ENCODE measurements at regions of chr9 and their contacts with region 1.

Region 1: DNA sequence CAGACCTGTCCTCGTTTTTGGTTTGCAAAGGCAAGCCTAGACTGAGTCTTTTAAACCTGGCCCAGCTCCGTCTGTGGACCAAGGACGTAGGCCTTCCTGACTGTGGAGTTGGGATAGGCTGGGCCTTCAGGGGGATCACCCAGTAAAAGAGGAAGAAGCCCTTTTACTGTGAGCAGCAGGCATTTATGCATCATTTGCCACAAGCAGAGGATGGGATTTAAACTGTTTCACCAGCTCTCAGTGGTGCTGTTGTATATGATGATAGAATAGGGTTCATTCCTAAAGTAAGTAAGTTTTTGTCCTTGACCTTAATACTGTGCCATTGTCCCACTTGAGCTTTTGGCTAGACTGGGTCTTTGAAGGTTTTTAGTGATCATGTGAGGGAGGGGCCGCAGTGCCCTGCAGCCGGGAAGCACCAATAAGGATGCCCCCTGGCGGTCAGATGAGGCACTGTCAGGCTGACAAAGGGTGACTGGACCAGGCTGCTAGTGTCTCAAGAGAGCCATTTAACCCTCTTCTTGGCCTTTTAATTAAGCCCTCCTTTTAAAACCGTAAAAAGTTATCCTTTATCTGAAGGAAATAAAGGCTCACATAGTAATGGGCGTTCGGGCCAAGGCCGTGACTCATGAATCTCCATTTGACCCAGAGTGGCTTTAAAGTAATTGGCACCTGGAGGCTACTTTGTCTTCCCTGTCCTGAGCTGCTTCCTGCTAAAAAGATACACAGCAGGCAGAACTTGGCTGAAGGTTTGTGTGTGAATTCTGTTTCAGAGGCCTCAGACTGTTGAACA is 74.0 kb downstream of the UBAP1 start:
- DNase-seq: no peak
- ATAC-seq: peak; percentile 30

Region 2: DNA sequence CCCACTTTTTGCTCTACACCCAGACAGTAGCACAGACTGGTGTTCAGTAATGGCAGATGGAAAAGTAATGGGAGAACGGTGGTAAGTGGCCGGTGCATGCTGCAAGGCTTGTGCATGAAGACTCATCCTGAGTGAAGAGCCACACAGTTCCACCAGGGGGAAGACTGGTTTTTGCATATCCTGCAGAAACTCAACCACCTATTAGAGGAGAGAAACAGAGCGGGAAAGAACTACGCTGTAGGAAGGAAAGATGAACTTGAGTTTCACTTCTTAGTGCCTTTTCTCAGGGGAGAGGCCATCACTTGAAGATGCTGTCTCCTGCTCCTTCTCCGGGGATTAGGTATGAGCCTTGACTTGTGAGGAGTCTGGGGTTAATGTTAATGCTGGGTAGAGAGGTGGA is 467.0 kb before region 1 on chr9:
- intact Hi-C with region 1: loop called (anchors 10 kb)
- DNase-seq: no peak
- ATAC-seq: no peak

Region 3: DNA sequence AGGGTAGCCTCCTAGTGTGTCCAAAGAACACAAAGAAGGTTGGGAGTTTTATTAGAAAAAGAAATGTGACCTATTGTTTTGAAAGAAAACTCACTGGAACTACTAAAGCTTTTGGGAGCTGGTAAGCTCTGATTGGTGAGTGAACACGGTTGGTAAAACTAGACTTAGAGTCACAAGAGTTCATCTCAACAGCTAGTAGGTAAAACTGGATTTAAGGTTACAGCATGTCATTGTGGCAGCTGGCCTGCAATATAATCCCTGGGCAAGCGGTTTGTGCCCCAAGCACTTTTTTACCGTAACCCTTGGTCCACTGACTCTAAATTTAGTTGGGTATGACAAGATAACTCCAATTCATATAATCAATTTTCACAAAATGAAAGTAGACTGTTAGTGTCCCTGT is 251.6 kb before region 1 on chr9:
- intact Hi-C with region 1: loop called (anchors 10 kb)
- DNase-seq: no peak
- ATAC-seq: no peak

Region 4: GRCh38 chr9:34072868-34073590 is 179.8 kb before region 1 on chr9:
- intact Hi-C with region 1: loop called (anchors 10 kb)
- DNase-seq: no peak
- ATAC-seq: peak; percentile 58

Region 5: DNA sequence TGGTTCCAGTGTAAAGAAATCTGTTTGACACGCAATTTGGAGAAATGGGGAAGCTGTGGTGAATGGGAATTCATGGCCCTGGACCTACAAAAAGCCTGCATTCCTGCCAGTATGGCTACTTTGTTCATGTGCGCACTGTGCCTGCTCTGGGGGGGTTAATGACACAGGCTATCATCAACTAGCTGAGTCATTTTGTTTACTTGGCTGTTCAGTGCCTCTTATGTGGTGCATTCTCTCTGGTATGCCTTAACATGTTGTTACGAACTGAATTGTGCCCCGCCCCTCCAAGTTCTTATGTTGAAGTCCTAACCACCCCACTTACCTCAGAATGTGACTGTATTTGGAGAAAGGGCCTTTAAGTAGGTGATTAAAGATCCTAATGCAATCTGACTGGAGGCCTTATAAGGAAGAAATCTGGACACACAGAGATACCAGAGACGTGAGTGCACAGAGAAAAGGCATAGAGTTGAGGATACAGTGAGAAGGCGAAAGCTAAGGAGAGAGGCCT is 94.4 kb before region 1 on chr9:
- intact Hi-C with region 1: no loop called
- DNase-seq: no peak
- ATAC-seq: no peak

Region 6: GRCh38 chr9:34178520-34179212 is 74.2 kb before region 1 on chr9 and contains the start of gene UBAP1:
- intact Hi-C with region 1: loop called (anchors 5 kb)
- DNase-seq: peak; percentile 98
- ATAC-seq: peak; percentile 99
- total RNA-seq, gene UBAP1: 48.9 TPM

Region 7: DNA sequence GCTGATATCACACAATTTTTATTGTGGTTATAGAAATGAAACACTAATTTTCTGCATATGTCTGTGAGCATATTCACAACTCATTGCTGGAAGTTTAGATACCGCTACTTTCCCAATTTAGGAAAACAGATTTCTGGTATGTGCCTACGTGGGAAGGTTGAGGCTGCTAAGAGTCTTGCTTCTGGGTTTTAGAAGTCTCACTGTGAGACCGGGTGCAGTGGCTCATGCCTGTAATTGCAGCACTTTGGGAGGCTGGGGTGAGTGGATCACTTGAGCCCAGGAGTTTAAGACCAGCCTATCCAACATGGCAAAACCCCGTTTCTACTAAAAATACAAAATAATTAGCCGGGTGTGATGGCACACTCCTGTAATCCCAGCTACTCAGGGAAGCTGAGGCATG is 34.4 kb before region 1 on chr9:
- intact Hi-C with region 1: no loop called
- DNase-seq: no peak
- ATAC-seq: no peak

Region 8: DNA sequence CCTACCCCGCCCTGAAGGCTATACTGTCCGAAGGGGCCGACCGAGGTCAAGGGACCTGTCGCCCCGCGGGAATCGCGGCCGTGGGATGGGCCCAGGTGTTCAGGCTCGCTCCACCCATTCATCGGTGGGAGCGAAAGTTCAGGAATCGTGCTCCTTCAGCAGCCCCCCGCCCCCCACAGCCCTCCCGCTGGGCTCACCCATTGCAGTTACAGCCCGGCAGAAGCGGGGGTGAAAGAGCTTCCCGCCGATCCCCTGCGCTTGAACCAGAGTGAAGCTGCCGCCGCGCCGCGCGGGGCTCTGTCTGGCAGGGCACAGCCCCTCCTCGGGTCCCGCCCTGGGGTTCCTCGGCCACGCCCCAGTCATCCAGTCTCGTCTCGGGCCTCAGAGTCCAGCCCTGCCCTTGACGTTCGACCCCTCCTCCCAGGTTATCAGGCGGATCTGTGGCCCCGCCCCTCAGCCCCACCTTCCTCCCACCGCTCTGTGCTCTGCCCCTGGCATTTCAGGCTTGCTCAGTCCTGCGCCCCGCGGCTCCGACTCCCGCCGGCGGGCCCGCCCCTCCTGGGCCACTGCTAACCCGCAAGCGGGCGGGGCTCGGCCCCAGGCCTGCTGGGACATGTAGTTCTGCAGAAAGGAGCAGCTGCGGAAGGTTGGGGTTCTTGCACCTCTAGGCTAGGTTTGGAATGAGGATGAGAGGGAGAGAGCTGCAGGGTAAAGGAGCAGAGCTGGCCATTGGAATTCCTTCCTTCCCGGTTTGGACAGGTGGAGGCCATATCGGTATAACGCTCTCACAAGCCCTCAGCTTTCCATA is 123.9 kb after region 1 on chr9 and contains the start of gene MYORG:
- intact Hi-C with region 1: loop called (anchors 5 kb)
- DNase-seq: peak; percentile 97
- ATAC-seq: peak; percentile 86
- total RNA-seq, gene MYORG: 9.0 TPM

Region 9: GRCh38 chr9:34437006-34437925 is 184.4 kb after region 1 on chr9:
- intact Hi-C with region 1: no loop called
- DNase-seq: no peak
- ATAC-seq: peak; percentile 73